HCT116 (cell line): ENCODE measurements at regions of chr1 and their contacts with region 1.

Region 1: GRCh38 chr1:48202030-48202752 is 20.3 kb upstream of the SLC5A9 start:
- DNase-seq: peak; percentile 37
- ATAC-seq: peak; percentile 82
- H3K4me3 ChIP-seq: no peak overlapping the region
- H3K27ac ChIP-seq: no peak overlapping the region
- H3K4me1 ChIP-seq: no peaks in the 10 kb centered on the region
- H3K27me3 ChIP-seq: peaks cover 13% of the 10 kb centered on the region; the same call in 1 of the 2 replicates
- CTCF ChIP-seq: peak; percentile 77 to 83 (median 79)
- POLR2A ChIP-seq: no peak
- RAD21 ChIP-seq: peak; percentile 75

Region 2: GRCh38 chr1:47738560-47739182 is 463.5 kb before region 1 on chr1:
- CTCF ChIA-PET with region 1: interaction called, 7 read pairs
- POLR2A ChIA-PET with region 1: no interaction called
- RAD21 ChIA-PET with region 1: no interaction called
- intact Hi-C with region 1: loop called (anchors 1 kb)
- DNase-seq: no peak
- ATAC-seq: peak; percentile 95
- H3K4me3 ChIP-seq: no peak overlapping the region
- H3K27ac ChIP-seq: no peak overlapping the region
- H3K4me1 ChIP-seq: no peaks in the 10 kb centered on the region
- H3K27me3 ChIP-seq: peaks cover 6% of the 10 kb centered on the region; the same call in 1 of the 2 replicates
- CTCF ChIP-seq: peak; percentile 50 to 85 (median 74); a peak in 5 of 6 replicates
- POLR2A ChIP-seq: no peak
- RAD21 ChIP-seq: peak; percentile 73

Region 3: GRCh38 chr1:47997289-47998200 is 204.6 kb before region 1 on chr1 and contains the start of gene TRABD2B:
- CTCF ChIA-PET with region 1: interaction called, 3 read pairs
- POLR2A ChIA-PET with region 1: no interaction called
- RAD21 ChIA-PET with region 1: no interaction called
- intact Hi-C with region 1: loop called (anchors 5 kb)
- DNase-seq: peak; percentile 26
- ATAC-seq: peak; percentile 97
- H3K4me3 ChIP-seq: peak within 1 kb of the TSS; percentile 27 to 42
- H3K27ac ChIP-seq: no peak within 1 kb of the TSS
- H3K4me1 ChIP-seq: peaks cover 0 to 3% of the 10 kb centered on the region in 2 experiments; a peak in 2 of 4 replicates
- H3K27me3 ChIP-seq: peaks cover 18% of the 10 kb centered on the region; the same call in 1 of the 2 replicates
- CTCF ChIP-seq: peak; percentile 81 to 96 (median 92)
- POLR2A ChIP-seq: no peak
- RAD21 ChIP-seq: peak; percentile 78
- total RNA-seq, gene TRABD2B: 0.05 TPM

Region 4: DNA sequence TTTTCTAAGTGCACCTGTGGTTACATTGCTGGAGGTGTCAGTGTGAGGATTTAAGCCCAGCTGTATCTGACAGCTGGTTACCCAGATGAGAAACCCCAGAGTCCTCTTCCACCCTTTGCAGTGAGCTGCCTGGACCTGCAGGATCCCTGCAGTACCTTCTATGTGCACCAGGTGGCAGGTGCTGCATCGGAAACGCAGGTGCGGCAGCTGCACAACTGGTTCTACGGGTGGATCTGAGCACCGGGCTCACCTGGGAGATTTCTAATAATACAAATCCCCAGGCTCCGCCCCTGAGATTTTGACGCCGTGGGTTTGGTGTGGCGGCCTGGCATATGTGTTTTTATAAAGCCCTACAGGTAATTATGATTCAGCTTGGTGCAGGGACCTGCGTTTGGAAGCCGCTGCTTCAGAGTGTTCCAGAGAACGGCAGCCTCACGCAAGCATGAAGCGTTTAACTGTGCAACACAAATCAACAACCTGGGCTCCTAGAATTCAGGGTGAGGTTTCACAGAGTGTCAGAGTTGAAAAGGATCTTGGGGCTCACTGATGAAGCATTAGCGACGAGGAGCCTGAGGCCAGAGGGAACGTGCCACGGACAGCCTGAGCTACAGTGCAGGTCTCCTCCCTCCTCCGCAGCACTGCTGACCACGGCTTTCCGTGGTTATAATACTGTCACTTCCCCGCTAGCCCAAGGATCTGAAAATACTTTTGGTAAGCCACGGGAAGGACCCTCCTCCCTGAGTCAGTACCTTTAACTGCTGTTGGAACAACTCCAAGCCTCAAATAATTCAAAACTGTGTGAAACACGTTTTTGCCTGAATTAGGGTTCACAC is 108.3 kb before region 1 on chr1:
- CTCF ChIA-PET with region 1: interaction called, 13 read pairs
- POLR2A ChIA-PET with region 1: no interaction called
- RAD21 ChIA-PET with region 1: no interaction called
- intact Hi-C with region 1: loop called (anchors 1 kb)
- DNase-seq: peak; percentile 72
- ATAC-seq: peak; percentile 99
- H3K4me3 ChIP-seq: no peak overlapping the region
- H3K27ac ChIP-seq: no peak overlapping the region
- H3K4me1 ChIP-seq: peaks cover 0 to 6% of the 10 kb centered on the region in 2 experiments; a peak in 2 of 4 replicates
- H3K27me3 ChIP-seq: peaks cover 37% of the 10 kb centered on the region
- CTCF ChIP-seq: peak; percentile 83 to 95 (median 88)
- POLR2A ChIP-seq: no peak
- RAD21 ChIP-seq: peak; percentile 78

Region 5: GRCh38 chr1:48109390-48110013 is 92.7 kb before region 1 on chr1:
- CTCF ChIA-PET with region 1: interaction called, 48 read pairs
- POLR2A ChIA-PET with region 1: no interaction called
- RAD21 ChIA-PET with region 1: interaction called, 5 read pairs
- intact Hi-C with region 1: loop called (anchors 1 kb)
- DNase-seq: peak; percentile 24
- ATAC-seq: peak; percentile 89
- H3K4me3 ChIP-seq: no peak overlapping the region
- H3K27ac ChIP-seq: no peak overlapping the region
- H3K4me1 ChIP-seq: no peaks in the 10 kb centered on the region
- H3K27me3 ChIP-seq: peaks cover 26% of the 10 kb centered on the region
- CTCF ChIP-seq: peak; percentile 72 to 86 (median 85)
- POLR2A ChIP-seq: no peak
- RAD21 ChIP-seq: peak; percentile 81

Region 6: GRCh38 chr1:48236716-48237470 is 34.7 kb after region 1 on chr1:
- CTCF ChIA-PET with region 1: interaction called, 5 read pairs
- POLR2A ChIA-PET with region 1: no interaction called
- RAD21 ChIA-PET with region 1: no interaction called
- intact Hi-C with region 1: loop called (anchors 1 kb)
- DNase-seq: peak; percentile 28
- ATAC-seq: peak; percentile 75
- H3K4me3 ChIP-seq: no peak overlapping the region
- H3K27ac ChIP-seq: no peak overlapping the region
- H3K4me1 ChIP-seq: no peaks in the 10 kb centered on the region
- H3K27me3 ChIP-seq: peaks cover 7% of the 10 kb centered on the region; the same call in 1 of the 2 replicates
- CTCF ChIP-seq: peak; percentile 43 to 70 (median 59); a peak in 5 of 6 replicates
- POLR2A ChIP-seq: no peak
- RAD21 ChIP-seq: peak; percentile 76

Region 7: DNA sequence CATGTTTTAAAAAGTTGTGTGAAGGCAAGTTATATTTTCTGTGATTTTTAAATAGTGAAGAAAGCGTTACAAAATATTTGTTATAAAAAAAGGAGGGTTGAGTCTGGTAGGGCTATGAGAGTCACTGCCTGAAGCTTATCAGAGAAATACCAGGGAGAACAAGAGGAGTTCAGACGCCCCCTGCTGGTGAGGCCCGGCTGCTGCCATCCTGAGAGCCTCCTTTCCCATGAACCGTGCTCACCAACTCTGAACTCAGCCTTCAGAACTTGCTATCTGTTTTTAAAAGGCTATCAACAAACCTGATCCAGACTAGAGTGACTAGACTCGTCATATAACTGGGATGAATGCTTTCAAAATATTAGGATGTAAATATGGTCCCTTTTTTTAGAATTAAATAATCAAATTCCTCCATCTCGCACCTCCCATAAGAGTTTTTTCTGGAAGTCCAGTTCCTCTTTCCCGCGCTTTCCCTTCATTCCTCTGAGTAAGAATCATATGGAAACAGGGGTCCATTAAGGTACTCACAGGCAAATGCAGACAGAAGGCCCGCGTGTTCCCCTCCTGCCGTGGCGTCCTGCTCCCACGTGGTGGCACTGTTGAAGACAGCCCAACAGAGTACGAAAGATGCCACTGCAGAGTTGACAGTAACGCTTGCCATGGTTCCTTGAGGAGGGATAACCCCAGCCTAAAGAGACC is 296.1 kb after region 1 on chr1:
- CTCF ChIA-PET with region 1: no interaction called
- POLR2A ChIA-PET with region 1: no interaction called
- RAD21 ChIA-PET with region 1: no interaction called
- intact Hi-C with region 1: loop called (anchors 5 kb)
- DNase-seq: peak; percentile 36
- ATAC-seq: peak; percentile 95
- H3K4me3 ChIP-seq: no peak overlapping the region
- H3K27ac ChIP-seq: no peak overlapping the region
- H3K4me1 ChIP-seq: peaks cover 0 to 4% of the 10 kb centered on the region in 2 experiments; a peak in 2 of 4 replicates
- H3K27me3 ChIP-seq: peaks cover 4% of the 10 kb centered on the region
- CTCF ChIP-seq: peak; percentile 59 to 96 (median 84)
- POLR2A ChIP-seq: no peak
- RAD21 ChIP-seq: peak; percentile 62